ENCODE measurements at regions of chr15 and their contacts with region 1.

Region 1: DNA sequence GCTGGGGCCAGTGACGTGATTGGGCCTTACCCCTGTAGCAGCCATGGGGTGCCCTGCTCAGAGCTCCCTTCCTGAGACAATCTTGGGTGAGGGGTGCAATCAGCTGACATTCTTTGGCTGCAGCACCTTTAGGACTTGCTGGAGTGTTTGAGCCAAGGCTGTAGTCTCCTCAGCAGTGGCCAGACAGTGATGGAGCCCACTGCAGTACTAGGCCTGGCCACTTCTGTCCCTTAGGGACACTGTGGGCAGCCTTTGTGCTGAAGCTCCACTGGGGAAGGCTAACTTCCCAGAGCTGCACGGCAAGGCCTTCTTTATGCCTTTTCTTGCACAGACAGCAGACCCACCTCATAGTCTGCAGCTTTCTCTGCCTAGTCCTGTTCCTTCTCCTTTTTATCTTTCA is 284.9 kb upstream of the IGF1R start:
- DNase-seq: no peak
- H3K4me3 Mint-ChIP-seq: no peak overlapping the region
- H3K27ac Mint-ChIP-seq: no peak overlapping the region
- H3K4me1 Mint-ChIP-seq: no peaks in the 10 kb centered on the region
- H3K27me3 Mint-ChIP-seq: no peaks in the 10 kb centered on the region
- CTCF ChIP-seq: no peak

Region 2: DNA sequence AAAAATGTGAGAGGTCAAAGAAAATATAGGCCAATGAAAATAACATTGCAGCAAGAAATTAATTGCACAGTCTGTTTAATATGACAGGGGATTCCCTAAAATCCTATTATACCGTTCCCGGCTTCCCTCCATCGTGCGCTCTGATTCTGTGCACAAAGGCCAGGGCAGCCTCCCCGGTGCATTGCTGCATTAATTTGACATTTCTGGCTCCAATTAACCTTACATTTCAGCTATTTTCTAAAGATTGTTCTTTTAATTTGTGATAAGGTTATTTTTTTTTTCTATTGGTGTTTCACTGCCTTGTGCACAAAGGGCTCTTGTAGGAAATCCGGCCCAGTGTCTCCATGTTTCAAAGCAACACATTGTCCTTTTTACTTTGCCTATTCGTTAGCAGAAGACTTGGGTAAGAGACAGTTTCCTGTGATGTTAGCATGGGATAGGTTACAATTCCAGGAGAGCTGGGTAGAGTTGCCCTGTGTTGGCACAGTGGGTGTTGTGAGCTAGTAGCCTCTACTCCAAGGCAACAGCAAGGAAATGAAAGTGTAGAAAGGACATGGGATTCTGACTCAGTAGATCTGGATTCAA is 27.6 kb after region 1 on chr15:
- CTCF ChIA-PET with region 1: no interaction called
- POLR2A ChIA-PET with region 1: no interaction called
- intact Hi-C with region 1: no loop called
- DNase-seq: no peak
- H3K4me3 Mint-ChIP-seq: no peak overlapping the region
- H3K27ac Mint-ChIP-seq: no peak overlapping the region
- H3K4me1 Mint-ChIP-seq: no peaks in the 10 kb centered on the region
- H3K27me3 Mint-ChIP-seq: peaks cover 29% of the 10 kb centered on the region
- CTCF ChIP-seq: no peak

Region 3: GRCh38 chr15:98403579-98403978 is 40.2 kb after region 1 on chr15:
- CTCF ChIA-PET with region 1: interaction called, 11 read pairs
- POLR2A ChIA-PET with region 1: no interaction called
- intact Hi-C with region 1: no loop called
- DNase-seq: no peak
- H3K4me3 Mint-ChIP-seq: no peak overlapping the region
- H3K27ac Mint-ChIP-seq: no peak overlapping the region
- H3K4me1 Mint-ChIP-seq: no peaks in the 10 kb centered on the region
- H3K27me3 Mint-ChIP-seq: peaks cover 34% of the 10 kb centered on the region
- CTCF ChIP-seq: no peak

Measured in MCF 10A (cell line).